ENCODE measurements at regions of chr7 and their contacts with region 1.

Region 1: GRCh38 chr7:37234928-37235327 is 213.7 kb downstream of the ELMO1 start:
- DNase-seq: no peak
- H3K4me3 ChIP-seq: no peak overlapping the region
- H3K27ac ChIP-seq: no peak overlapping the region
- H3K4me1 ChIP-seq: no peaks in the 10 kb centered on the region
- H3K27me3 ChIP-seq: no peaks in the 10 kb centered on the region
- CTCF ChIP-seq: peak; percentile 37 to 71 (median 50)

Region 2: GRCh38 chr7:37040330-37040729 is 194.6 kb before region 1 on chr7:
- intact Hi-C with region 1: no loop called
- DNase-seq: no peak
- H3K4me3 ChIP-seq: no peak overlapping the region
- H3K27ac ChIP-seq: no peak overlapping the region
- H3K4me1 ChIP-seq: no peaks in the 10 kb centered on the region
- H3K27me3 ChIP-seq: no peaks in the 10 kb centered on the region
- CTCF ChIP-seq: no peak

Region 3: GRCh38 chr7:37065779-37066271 is 169.1 kb before region 1 on chr7:
- intact Hi-C with region 1: no loop called
- DNase-seq: no peak
- H3K4me3 ChIP-seq: no peak overlapping the region
- H3K27ac ChIP-seq: no peak overlapping the region
- H3K4me1 ChIP-seq: no peaks in the 10 kb centered on the region
- H3K27me3 ChIP-seq: no peaks in the 10 kb centered on the region
- CTCF ChIP-seq: no peak

Region 4: DNA sequence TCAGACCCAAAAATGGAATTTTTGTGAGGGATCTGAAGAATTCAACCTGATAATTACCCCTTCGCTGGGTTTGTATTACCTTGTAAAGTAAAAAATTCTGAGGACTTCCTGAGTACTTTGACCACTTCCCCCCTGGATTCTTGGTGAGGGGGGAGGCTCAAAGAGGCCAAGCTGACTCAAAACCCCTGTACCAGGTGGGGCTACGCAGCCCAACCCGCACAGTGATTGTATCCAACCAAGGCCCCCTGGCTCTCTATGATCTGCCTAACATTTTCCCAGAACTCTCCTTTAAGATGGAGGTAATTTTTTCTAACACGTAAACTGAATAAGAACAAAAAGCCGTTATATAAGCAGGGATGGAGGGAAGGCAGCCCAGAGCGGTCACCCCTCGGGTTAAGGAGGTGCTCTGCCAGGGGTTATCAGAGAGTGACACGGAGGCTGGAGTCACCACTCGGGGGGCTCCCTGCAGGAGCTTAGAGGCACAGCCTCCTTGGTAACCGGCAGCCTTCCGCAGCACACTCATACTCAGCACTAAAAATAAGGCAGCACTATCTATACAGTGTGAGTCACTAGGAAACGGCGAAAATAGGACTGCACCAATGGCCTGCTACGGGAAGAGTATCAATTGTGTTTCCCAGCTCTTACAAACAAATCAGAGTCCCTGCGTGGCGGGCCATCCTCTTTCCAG is 41.7 kb before region 1 on chr7:
- intact Hi-C with region 1: no loop called
- DNase-seq: no peak
- H3K4me3 ChIP-seq: peak overlapping the region; percentile 17 to 42
- H3K27ac ChIP-seq: peak overlapping the region in 1 of 2 donors; percentile 10
- H3K4me1 ChIP-seq: peaks cover 0 to 2% of the 10 kb centered on the region in 2 donors
- H3K27me3 ChIP-seq: no peaks in the 10 kb centered on the region
- CTCF ChIP-seq: no peak

Region 5: GRCh38 chr7:37205451-37205850 is 29.5 kb before region 1 on chr7:
- intact Hi-C with region 1: no loop called
- DNase-seq: no peak
- H3K4me3 ChIP-seq: no peak overlapping the region
- H3K27ac ChIP-seq: no peak overlapping the region
- H3K4me1 ChIP-seq: peaks cover 0 to 28% of the 10 kb centered on the region in 2 donors
- H3K27me3 ChIP-seq: no peaks in the 10 kb centered on the region
- CTCF ChIP-seq: no peak

Region 6: GRCh38 chr7:37494926-37495325 is 260.0 kb after region 1 on chr7:
- intact Hi-C with region 1: loop called (anchors 5 kb)
- DNase-seq: no peak
- H3K4me3 ChIP-seq: no peak overlapping the region
- H3K27ac ChIP-seq: no peak overlapping the region
- H3K4me1 ChIP-seq: no peaks in the 10 kb centered on the region
- H3K27me3 ChIP-seq: no peaks in the 10 kb centered on the region
- CTCF ChIP-seq: no peak

Region 7: GRCh38 chr7:37504801-37505200 is 269.9 kb after region 1 on chr7:
- intact Hi-C with region 1: loop called (anchors 5 kb)
- DNase-seq: no peak
- H3K4me3 ChIP-seq: no peak overlapping the region
- H3K27ac ChIP-seq: no peak overlapping the region
- H3K4me1 ChIP-seq: no peaks in the 10 kb centered on the region
- H3K27me3 ChIP-seq: no peaks in the 10 kb centered on the region
- CTCF ChIP-seq: no peak

Region 8: GRCh38 chr7:37833107-37833817 is 598.3 kb after region 1 on chr7:
- intact Hi-C with region 1: loop called (anchors 5 kb)
- DNase-seq: no peak
- H3K4me3 ChIP-seq: peak overlapping the region; percentile 34 to 45
- H3K27ac ChIP-seq: no peak overlapping the region
- H3K4me1 ChIP-seq: no peaks in the 10 kb centered on the region
- H3K27me3 ChIP-seq: no peaks in the 10 kb centered on the region
- CTCF ChIP-seq: peak; percentile 47 to 80 (median 66)

Measured in ascending aorta (tissue), 2 donors.